Pancreas (tissue), 10 donors: ENCODE measurements at regions of chr17 and their contacts with region 1.

Region 1: GRCh38 chr17:74736513-74737298 is at the start of gene RAB37:
- DNase-seq: peak in 4 of 6 donors; percentile 57 to 74 (median 62)
- ATAC-seq: peak; percentile 73 to 79 (median 75)
- H3K4me3 ChIP-seq: peak within 1 kb of the TSS in 2 of 4 donors; percentile 29 to 41
- H3K27ac ChIP-seq: peak within 1 kb of the TSS in 3 of 4 donors; percentile 49 to 62 (median 53)
- H3K4me1 ChIP-seq: peaks cover 0 to 10% (median 0%) of the 10 kb centered on the region in 3 donors
- H3K27me3 ChIP-seq: peaks cover 0 to 4% (median 0%) of the 10 kb centered on the region in 4 donors
- CTCF ChIP-seq: no peak
- total RNA-seq, gene RAB37: 0.79 to 1.8 (median 1.2) TPM

Region 2: GRCh38 chr17:73888862-73889261 is 847.8 kb before region 1 on chr17:
- intact Hi-C with region 1: no loop called
- DNase-seq: no peak
- ATAC-seq: no peak
- H3K4me3 ChIP-seq: no peak overlapping the region
- H3K27ac ChIP-seq: no peak overlapping the region
- H3K4me1 ChIP-seq: no peaks in the 10 kb centered on the region
- H3K27me3 ChIP-seq: no peaks in the 10 kb centered on the region
- CTCF ChIP-seq: no peak

Region 3: DNA sequence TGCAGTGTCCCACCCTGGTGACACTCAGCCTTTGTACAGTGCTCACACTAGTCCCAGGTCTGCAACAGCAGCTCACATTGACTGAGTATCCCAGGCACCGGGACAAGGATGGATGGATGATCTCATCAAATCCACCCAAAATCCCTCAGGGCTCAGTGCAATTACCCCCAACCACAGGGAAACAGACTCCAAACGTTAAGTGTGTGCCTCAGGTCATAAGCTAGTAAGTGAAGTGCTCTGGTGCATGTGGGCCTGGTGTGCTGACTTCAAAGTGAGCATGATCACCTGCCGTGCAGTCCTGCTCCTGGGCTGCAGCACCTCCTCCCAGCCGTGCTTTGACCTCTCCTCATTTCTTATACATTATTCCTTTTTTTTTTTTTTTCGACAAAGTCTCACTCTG is 82.0 kb before region 1 on chr17:
- intact Hi-C with region 1: loop called in 1 of 3 experiments (anchors 5 kb)
- DNase-seq: no peak
- ATAC-seq: no peak
- H3K4me3 ChIP-seq: no peak overlapping the region
- H3K27ac ChIP-seq: no peak overlapping the region
- H3K4me1 ChIP-seq: no peaks in the 10 kb centered on the region
- H3K27me3 ChIP-seq: no peaks in the 10 kb centered on the region
- CTCF ChIP-seq: no peak

Region 4: DNA sequence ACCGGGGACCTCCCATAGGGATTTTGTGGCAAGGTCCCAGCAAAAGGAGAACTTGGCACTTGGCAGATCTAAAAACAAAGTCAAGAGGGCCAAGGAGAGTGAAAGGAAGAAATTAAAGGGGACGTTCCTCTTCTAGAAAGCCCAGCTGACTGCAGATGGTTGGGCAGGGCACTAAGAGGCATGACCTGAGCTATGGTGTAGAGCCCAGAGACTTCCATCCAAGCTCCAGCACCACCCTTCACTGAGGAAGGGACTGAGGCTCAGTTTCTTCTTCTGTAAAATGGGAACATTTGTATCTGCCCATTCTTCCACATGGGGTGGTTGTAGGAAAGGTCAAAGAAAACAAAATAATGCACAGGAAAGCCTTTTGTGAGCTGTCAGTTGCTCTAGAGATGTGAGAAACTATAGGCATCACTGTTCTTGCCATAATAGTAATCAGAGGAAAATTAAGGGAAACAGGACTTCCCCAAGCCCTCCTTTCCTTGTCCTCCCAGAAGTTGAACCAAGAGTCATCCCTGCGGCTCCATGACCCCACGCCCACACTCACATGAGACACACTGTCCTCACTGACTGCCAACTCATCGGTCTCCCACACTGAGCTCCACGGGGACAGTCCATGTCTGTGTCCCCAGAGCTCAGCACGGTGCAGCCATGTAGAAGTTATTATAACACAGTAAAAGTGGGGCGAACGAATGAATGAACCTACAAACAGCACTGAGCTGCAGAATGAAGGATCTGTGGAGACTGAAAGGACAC is 34.4 kb before region 1 on chr17:
- intact Hi-C with region 1: no loop called
- DNase-seq: no peak
- ATAC-seq: peak in 2 of 4 donors; percentile 32 to 42
- H3K4me3 ChIP-seq: no peak overlapping the region
- H3K27ac ChIP-seq: no peak overlapping the region
- H3K4me1 ChIP-seq: no peaks in the 10 kb centered on the region
- H3K27me3 ChIP-seq: no peaks in the 10 kb centered on the region
- CTCF ChIP-seq: no peak